ENCODE measurements at regions of chr2 and their contacts with region 1.

Region 1: GRCh38 chr2:232365621-232366321 is 12.8 kb upstream of the ALPP start:
- DNase-seq: peak; percentile 52 to 76
- ATAC-seq: peak; percentile 91 to 96
- H3K4me3 ChIP-seq: no peak overlapping the region
- H3K27ac ChIP-seq: no peak overlapping the region
- H3K4me1 ChIP-seq: peaks cover 16% of the 10 kb centered on the region; the same call in 2 of the 3 replicates
- CTCF ChIP-seq: peak; percentile 49
- EP300 ChIP-seq: no peak
- POLR2A ChIP-seq: no peak
- RAD21 ChIP-seq: peak; percentile 52 to 63

Region 2: DNA sequence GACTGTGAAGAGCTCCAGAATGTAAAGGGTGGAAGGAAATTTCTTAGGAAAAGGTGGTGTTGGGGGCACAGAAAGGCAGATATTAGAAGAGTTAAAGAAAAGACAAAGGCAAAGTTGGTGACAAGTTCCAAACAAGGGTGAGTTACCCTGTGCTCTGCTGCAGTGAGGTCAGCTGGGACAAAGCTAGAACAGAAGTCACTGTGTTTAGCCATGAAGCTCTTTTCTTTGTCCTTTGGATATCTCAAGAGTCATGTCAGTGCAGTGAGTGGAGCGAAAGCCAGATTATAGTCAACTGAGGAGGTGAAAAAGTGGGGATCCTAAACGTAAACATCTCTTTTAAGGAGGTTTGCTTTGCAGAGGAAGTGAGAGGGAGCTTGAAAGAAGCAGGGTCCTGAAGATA is 175.0 kb before region 1 on chr2:
- CTCF ChIA-PET with region 1: no interaction called
- POLR2A ChIA-PET with region 1: no interaction called
- DNase-seq: no peak
- ATAC-seq: no peak
- H3K4me3 ChIP-seq: no peak overlapping the region
- H3K27ac ChIP-seq: no peak overlapping the region
- H3K4me1 ChIP-seq: no peaks in the 10 kb centered on the region
- CTCF ChIP-seq: no peak
- EP300 ChIP-seq: no peak
- POLR2A ChIP-seq: no peak
- RAD21 ChIP-seq: no peak

Region 3: GRCh38 chr2:232250246-232251175 is 115.3 kb before region 1 on chr2:
- CTCF ChIA-PET with region 1: no interaction called
- POLR2A ChIA-PET with region 1: no interaction called
- DNase-seq: no peak
- ATAC-seq: no peak
- H3K4me3 ChIP-seq: no peak overlapping the region
- H3K27ac ChIP-seq: no peak overlapping the region
- H3K4me1 ChIP-seq: no peaks in the 10 kb centered on the region
- CTCF ChIP-seq: no peak
- EP300 ChIP-seq: no peak
- POLR2A ChIP-seq: no peak
- RAD21 ChIP-seq: no peak

Region 4: DNA sequence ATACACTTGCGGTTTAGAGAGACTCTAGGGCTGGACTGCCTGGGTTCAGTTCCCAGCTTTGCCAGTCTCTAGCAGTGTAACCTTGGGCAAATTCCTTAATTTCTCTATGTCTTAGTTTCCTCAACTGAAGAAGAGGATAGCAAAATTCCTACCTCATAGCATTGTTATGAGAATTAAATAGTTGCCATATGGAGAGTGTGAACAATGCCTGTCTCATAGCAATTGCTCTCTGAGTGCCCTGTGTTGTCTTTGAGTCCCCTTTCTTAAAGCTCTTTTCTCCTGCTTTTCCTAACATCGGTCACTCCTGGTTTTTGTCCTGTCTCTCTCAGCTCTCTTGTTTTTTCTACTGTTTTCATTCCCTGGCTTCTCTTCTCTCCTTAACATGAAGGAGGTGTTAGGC is 104.0 kb before region 1 on chr2:
- CTCF ChIA-PET with region 1: no interaction called
- POLR2A ChIA-PET with region 1: no interaction called
- DNase-seq: no peak
- ATAC-seq: no peak
- H3K4me3 ChIP-seq: no peak overlapping the region
- H3K27ac ChIP-seq: no peak overlapping the region
- H3K4me1 ChIP-seq: no peaks in the 10 kb centered on the region
- CTCF ChIP-seq: no peak
- EP300 ChIP-seq: no peak
- POLR2A ChIP-seq: no peak
- RAD21 ChIP-seq: no peak

Region 5: DNA sequence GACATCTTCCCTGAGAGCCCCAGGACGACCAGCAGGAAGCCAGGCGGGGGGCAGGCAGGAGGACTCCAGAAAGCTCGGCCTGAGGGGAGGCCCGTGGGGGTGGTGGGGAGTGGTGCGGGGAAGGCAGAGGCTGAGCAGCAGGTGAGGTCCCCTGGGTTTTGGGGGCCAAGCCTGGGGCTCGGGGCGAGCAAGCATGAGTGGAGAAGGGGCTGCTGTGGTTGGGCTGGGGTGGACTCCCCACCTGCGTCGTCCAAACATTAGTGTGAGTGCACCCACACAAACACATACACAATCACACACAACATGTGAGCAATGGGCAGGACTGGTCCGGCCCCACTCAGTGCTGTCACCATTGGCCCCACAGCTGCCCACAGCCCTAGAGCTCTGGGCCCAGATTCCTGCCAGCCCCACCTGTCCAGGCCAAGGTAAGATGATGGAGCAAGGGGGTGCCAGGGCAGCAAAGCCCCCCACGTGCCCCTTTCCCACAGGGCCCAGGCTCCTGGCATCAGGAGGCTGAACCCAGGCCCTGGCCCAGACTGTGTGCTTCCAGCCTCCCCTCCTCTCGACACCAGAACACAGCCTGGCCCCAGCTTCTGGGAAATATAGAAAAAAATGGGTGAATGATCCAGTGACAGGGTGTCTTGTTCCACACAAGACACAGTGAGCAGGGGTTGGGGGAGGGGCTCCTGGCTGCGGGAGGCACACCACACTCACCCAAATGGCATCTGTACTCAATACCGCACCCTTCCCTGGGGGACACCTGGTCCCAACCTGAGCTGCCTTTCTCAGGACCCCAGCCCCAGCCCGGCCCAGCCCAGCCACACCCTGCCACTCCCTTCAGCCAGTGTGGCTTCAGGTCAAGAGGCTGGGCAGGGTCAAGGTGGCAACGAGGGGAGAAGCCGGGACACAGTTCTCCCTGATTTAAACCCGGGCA is 12.3 kb after region 1 on chr2:
- CTCF ChIA-PET with region 1: interaction called, 15 read pairs
- POLR2A ChIA-PET with region 1: no interaction called
- DNase-seq: no peak
- ATAC-seq: peak in 1 of 2 experiments; percentile 25; a peak in 2 of 6 replicates
- H3K4me3 ChIP-seq: no peak overlapping the region
- H3K27ac ChIP-seq: peak overlapping the region in 1 of 2 experiments; percentile 15; a peak in 2 of 6 replicates
- H3K4me1 ChIP-seq: peaks cover 8% of the 10 kb centered on the region
- CTCF ChIP-seq: no peak
- EP300 ChIP-seq: no peak
- POLR2A ChIP-seq: no peak
- RAD21 ChIP-seq: no peak

Region 6: DNA sequence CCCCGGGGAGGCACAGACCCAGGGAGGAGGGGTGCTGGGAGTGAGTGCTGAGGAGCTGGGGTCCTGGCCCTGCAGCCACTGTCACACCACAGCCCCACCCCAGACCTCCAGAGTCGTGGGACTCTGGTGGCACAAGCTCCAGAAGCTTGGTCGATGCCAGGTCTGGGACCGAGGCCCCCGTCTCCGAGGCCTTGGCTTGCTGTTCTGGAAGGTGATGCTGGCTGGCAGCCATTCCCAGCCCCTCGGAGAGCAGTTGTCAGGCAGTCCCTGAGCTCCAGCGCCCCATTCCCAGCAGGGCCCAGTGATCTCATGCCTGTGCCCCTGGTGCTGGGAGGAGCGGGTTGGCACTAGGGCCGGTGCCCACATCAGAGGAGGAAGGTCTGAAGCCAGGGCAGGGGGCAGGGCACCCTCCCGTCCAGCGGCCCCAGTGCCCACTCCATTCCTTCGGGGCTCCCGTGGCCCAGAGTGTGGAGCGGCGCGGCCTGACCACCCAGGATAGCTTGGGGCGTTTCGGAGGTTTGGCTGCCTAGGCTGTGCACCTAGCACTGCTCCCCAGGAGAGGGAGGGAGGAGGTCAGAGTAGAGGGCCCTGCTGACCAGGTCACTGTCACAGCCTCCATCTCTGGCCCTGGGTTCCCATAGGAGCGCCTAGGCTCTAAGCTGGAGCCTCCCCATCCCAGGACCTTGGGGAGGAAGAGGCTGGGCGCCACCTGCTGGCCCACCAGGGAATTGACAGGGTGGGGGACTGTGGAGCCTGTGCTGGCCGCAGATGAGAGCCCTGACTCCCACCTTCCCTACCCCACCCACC is 73.4 kb after region 1 on chr2:
- CTCF ChIA-PET with region 1: interaction called, 18 read pairs
- POLR2A ChIA-PET with region 1: no interaction called
- DNase-seq: peak in 1 of 2 experiments; percentile 44
- ATAC-seq: peak; percentile 65 to 84
- H3K4me3 ChIP-seq: no peak overlapping the region
- H3K27ac ChIP-seq: no peak overlapping the region
- H3K4me1 ChIP-seq: peaks cover 11% of the 10 kb centered on the region
- CTCF ChIP-seq: peak; percentile 63
- EP300 ChIP-seq: no peak
- POLR2A ChIP-seq: no peak
- RAD21 ChIP-seq: peak; percentile 58 to 67

Region 7: DNA sequence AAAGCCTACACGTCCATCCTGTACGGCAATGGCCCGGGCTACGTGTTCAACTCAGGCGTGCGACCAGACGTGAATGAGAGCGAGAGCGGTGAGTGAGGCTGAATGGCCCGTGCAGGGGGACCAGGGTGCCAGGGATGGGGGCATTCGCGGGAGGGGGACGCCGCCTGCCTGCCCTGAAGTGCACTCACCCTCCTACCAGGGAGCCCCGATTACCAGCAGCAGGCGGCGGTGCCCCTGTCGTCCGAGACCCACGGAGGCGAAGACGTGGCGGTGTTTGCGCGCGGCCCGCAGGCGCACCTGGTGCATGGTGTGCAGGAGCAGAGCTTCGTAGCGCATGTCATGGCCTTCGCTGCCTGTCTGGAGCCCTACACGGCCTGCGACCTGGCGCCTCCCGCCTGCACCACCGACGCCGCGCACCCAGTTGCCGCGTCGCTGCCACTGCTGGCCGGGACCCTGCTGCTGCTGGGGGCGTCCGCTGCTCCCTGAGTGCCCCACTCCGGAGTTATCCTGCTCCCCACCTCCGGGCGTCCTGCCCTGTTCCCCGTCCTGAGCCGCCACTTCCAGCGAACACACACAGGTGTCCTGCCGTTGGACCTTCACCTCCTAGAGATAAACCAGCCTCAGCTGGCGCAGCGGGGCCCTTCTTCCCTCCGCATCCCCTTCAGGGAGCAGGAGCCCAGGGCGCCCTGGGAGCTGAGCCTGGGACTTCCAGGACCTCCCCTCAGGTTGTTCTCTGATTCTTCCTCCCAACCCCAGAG is 93.1 kb after region 1 on chr2:
- CTCF ChIA-PET with region 1: no interaction called
- POLR2A ChIA-PET with region 1: no interaction called
- DNase-seq: no peak
- ATAC-seq: no peak
- H3K4me3 ChIP-seq: no peak overlapping the region
- H3K27ac ChIP-seq: no peak overlapping the region
- H3K4me1 ChIP-seq: no peaks in the 10 kb centered on the region
- CTCF ChIP-seq: no peak
- EP300 ChIP-seq: no peak
- POLR2A ChIP-seq: no peak
- RAD21 ChIP-seq: no peak